Heart right ventricle (tissue), 16 donors: ENCODE measurements at regions of chr11 and their contacts with region 1.

Region 1: DNA sequence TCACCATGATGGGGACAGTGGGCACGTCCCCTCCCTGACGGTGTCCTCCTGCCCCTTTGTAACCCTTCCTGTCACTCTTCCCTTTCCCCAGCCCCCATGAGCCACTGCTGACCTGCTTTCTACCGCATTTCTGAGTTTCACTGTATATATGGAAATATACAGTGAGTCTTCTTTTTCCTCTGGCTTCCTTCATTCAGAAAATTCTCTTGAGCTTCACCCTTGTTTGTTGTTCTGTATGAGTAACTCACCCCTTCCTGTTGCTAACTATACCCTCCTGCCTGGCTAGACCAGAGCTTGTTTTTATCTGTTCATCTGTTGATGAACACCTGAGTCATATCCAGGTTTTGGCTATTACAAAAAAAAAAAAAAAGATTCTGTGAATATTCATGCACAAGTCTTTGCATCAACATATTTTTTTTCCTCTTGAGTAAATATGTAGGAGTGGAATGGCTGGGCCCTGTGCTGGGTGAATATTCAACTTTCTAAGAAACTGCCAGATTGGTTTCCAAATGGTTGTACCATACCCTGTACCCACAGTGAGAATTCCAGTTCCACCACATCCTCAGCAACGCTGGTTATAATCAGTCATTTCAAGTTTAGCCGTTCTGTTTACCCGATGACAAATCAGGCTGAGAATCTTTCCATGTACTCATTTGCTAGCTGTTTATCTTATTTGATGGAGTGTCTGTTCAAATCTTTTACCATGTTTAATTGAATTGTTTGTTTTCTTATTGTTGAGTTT is 62.0 kb downstream of the IGF2 start:
- DNase-seq: no peak
- ATAC-seq: no peak
- H3K4me3 ChIP-seq: no peak overlapping the region
- H3K27ac ChIP-seq: no peak overlapping the region
- H3K4me1 ChIP-seq: no peaks in the 10 kb centered on the region
- H3K27me3 ChIP-seq: peaks cover 0 to 16% (median 9%) of the 10 kb centered on the region in 7 donors
- CTCF ChIP-seq: no peak

Region 2: GRCh38 chr11:1650034-1650917 is 427.0 kb before region 1 on chr11:
- intact Hi-C with region 1: no loop called
- DNase-seq: no peak
- ATAC-seq: no peak
- H3K4me3 ChIP-seq: no peak overlapping the region
- H3K27ac ChIP-seq: no peak overlapping the region
- H3K4me1 ChIP-seq: peaks cover 0 to 6% (median 4%) of the 10 kb centered on the region in 9 donors
- H3K27me3 ChIP-seq: peaks cover 0 to 20% (median 5%) of the 10 kb centered on the region in 7 donors
- CTCF ChIP-seq: no peak

Region 3: GRCh38 chr11:1839924-1840779 is 237.1 kb before region 1 on chr11:
- intact Hi-C with region 1: no loop called
- DNase-seq: peak; percentile 48 to 56
- ATAC-seq: peak in 6 of 8 donors; percentile 1 to 36 (median 20)
- H3K4me3 ChIP-seq: peak overlapping the region in 1 of 10 donors; percentile 45
- H3K27ac ChIP-seq: peak overlapping the region in 5 of 10 donors; percentile 25 to 93 (median 63)
- H3K4me1 ChIP-seq: peaks cover 11 to 61% (median 36%) of the 10 kb centered on the region in 9 donors
- H3K27me3 ChIP-seq: no peaks in the 10 kb centered on the region
- CTCF ChIP-seq: no peak

Region 4: GRCh38 chr11:2122222-2123085 is 45.2 kb after region 1 on chr11:
- intact Hi-C with region 1: loop called in 1 of 10 experiments (anchors 5 kb)
- DNase-seq: no peak
- ATAC-seq: no peak
- H3K4me3 ChIP-seq: no peak overlapping the region
- H3K27ac ChIP-seq: no peak overlapping the region
- H3K4me1 ChIP-seq: no peaks in the 10 kb centered on the region
- H3K27me3 ChIP-seq: peaks cover 0 to 31% (median 26%) of the 10 kb centered on the region in 7 donors
- CTCF ChIP-seq: no peak

Region 5: DNA sequence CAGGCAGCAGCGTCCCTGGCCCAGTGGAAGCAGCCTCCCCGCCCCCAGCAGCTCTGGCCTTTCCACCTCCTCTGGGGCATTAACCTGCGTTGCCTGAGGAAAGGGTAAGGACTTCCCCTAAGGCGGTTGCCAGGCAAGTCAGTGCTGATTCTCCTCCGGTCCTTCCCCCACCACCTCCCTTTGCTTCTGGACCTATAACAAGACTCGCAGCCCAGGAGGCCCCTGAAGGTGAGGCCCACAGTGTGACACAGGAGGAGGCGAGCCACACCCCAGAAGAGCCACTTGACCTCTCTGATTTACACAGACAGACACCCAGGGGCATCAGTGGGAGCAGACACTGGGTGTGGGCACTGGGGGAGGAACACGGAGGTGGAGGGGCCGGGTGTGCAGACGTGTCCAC is 157.7 kb after region 1 on chr11:
- intact Hi-C with region 1: no loop called
- DNase-seq: no peak
- ATAC-seq: no peak
- H3K4me3 ChIP-seq: no peak overlapping the region
- H3K27ac ChIP-seq: no peak overlapping the region
- H3K4me1 ChIP-seq: no peaks in the 10 kb centered on the region
- H3K27me3 ChIP-seq: peaks cover 0 to 4% (median 0%) of the 10 kb centered on the region in 7 donors
- CTCF ChIP-seq: no peak